T-cell (primary cell): ENCODE measurements at regions of chr16 and their contacts with region 1.

Region 1: GRCh38 chr16:50671644-50672260 is 9.4 kb downstream of the SNX20 start:
- DNase-seq: peak in 20 of 35 experiments; percentile 32 to 75 (median 40)
- ATAC-seq: no peak
- H3K4me3 ChIP-seq: peak overlapping the region in 1 of 2 donors; percentile 3
- H3K4me3 Mint-ChIP-seq: peak overlapping the region in 2 of 3 donors; percentile 13 to 19
- H3K27ac ChIP-seq: no peak overlapping the region
- H3K27ac Mint-ChIP-seq: peak overlapping the region; percentile 77 to 79
- H3K4me1 ChIP-seq: peaks cover 6 to 30% of the 10 kb centered on the region in 2 experiments
- H3K4me1 Mint-ChIP-seq: peaks cover 31 to 44% (median 40%) of the 10 kb centered on the region in 3 donors
- H3K27me3 ChIP-seq: no peaks in the 10 kb centered on the region
- H3K27me3 Mint-ChIP-seq: no peaks in the 10 kb centered on the region

Region 2: DNA sequence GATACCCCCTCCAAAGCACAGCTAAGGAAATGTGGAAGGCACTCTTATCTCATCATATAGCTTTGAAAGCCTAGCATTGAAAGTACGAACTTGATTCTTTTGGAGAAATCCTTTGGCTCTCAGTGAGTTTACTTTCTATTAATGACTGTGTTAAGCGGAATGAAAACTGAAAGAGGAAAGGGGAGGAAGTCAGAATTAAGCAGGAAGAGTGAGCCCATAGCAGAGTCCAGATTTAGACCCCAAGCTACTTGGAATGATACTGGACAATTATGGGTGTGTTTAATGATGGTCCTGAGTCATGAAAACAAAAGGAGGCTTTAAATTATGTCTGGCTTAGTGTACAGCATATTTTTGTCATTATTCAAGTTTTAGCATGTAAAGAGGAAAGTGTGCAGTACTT is 476.5 kb before region 1 on chr16:
- CTCF ChIA-PET with region 1: no interaction called
- POLR2A ChIA-PET with region 1: interaction called in 1 of 2 experiments, 18 read pairs
- DNase-seq: no peak
- ATAC-seq: no peak
- H3K4me3 ChIP-seq: no peak overlapping the region
- H3K4me3 Mint-ChIP-seq: peak overlapping the region in 1 of 3 donors; percentile 28
- H3K27ac ChIP-seq: peak overlapping the region; percentile 23
- H3K27ac Mint-ChIP-seq: peak overlapping the region; percentile 56 to 74
- H3K4me1 ChIP-seq: peaks cover 8 to 17% of the 10 kb centered on the region in 2 experiments
- H3K4me1 Mint-ChIP-seq: peaks cover 69 to 76% (median 74%) of the 10 kb centered on the region in 3 donors
- H3K27me3 ChIP-seq: no peaks in the 10 kb centered on the region
- H3K27me3 Mint-ChIP-seq: no peaks in the 10 kb centered on the region

Region 3: DNA sequence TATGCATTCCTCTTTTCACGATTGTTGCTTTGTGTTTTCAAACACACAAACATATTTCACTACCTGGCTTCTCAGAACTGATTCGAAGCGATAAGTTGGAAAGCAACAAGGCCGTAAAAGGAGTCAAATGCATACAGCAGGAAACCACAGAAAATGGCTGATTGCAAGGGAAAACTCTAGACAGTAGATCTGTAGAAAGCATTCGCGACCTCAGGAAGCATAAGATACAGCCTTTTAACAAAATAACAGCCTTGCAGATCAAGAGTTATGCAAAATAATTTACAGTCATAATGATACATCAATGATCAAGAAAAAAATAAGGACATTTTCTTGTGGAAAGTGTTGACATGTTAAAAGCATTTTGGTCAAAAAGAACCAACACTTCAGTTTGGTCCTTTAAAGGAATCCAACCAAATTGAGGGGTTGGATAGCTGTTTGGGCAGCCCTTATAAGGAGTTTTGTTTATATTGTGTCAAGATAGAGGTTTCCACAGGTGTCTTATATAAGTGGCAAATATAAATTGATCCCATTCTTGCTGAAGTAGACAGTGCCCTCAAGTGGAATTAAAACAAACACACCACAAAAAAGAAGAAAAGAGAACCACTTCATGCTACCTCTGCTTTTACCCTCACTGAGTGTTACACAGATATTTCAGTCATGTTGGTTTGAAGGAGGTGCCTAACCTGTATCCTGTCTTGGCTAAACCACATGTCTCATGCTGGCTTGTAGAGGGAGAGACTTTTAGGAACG is 75.6 kb after region 1 on chr16:
- CTCF ChIA-PET with region 1: interaction called, 8 to 30 read pairs
- POLR2A ChIA-PET with region 1: interaction called, 4 to 5 read pairs
- DNase-seq: peak in 13 of 35 experiments; percentile 7 to 77 (median 30)
- ATAC-seq: peak; percentile 74 to 79 (median 77)
- H3K4me3 ChIP-seq: peak overlapping the region; percentile 15 to 37
- H3K4me3 Mint-ChIP-seq: peak overlapping the region; percentile 72 to 98 (median 81)
- H3K27ac ChIP-seq: peak overlapping the region; percentile 100
- H3K27ac Mint-ChIP-seq: peak overlapping the region; percentile 95 to 97
- H3K4me1 ChIP-seq: peaks cover 16 to 62% of the 10 kb centered on the region in 2 experiments
- H3K4me1 Mint-ChIP-seq: peaks cover 71 to 77% (median 76%) of the 10 kb centered on the region in 3 donors
- H3K27me3 ChIP-seq: no peaks in the 10 kb centered on the region
- H3K27me3 Mint-ChIP-seq: no peaks in the 10 kb centered on the region

Region 4: GRCh38 chr16:50902457-50902856 is 230.7 kb after region 1 on chr16:
- CTCF ChIA-PET with region 1: no interaction called
- POLR2A ChIA-PET with region 1: no interaction called
- DNase-seq: no peak
- ATAC-seq: no peak
- H3K4me3 ChIP-seq: no peak overlapping the region
- H3K4me3 Mint-ChIP-seq: no peak overlapping the region
- H3K27ac ChIP-seq: no peak overlapping the region
- H3K27ac Mint-ChIP-seq: no peak overlapping the region
- H3K4me1 ChIP-seq: no peaks in the 10 kb centered on the region
- H3K4me1 Mint-ChIP-seq: no peaks in the 10 kb centered on the region
- H3K27me3 ChIP-seq: peaks cover 0 to 11% of the 10 kb centered on the region in 2 experiments
- H3K27me3 Mint-ChIP-seq: peaks cover 4 to 7% of the 10 kb centered on the region in 2 donors